Activated naive CD4-positive, alpha-beta T cell treated with anti-CD3 and anti-CD28 coated beads for 36 hours (primary cell): ENCODE measurements at regions of chr11 and their contacts with region 1.

Region 1: GRCh38 chr11:65117216-65118096 is at the start of gene ZNHIT2:
- DNase-seq: peak; percentile 100
- H3K4me3 Mint-ChIP-seq: peak within 1 kb of the TSS; percentile 87
- H3K27ac Mint-ChIP-seq: peak within 1 kb of the TSS; percentile 87
- H3K4me1 Mint-ChIP-seq: peaks cover 66% of the 10 kb centered on the region
- H3K27me3 Mint-ChIP-seq: no peaks in the 10 kb centered on the region
- total RNA-seq, gene ZNHIT2: 5.6 to 6.1 TPM

Region 2: GRCh38 chr11:64846998-64847666 is 270.3 kb before region 1 on chr11:
- CTCF ChIA-PET with region 1: interaction called, 14 read pairs
- intact Hi-C with region 1: loop called (anchors 1 kb)
- DNase-seq: peak; percentile 96
- H3K4me3 Mint-ChIP-seq: no peak overlapping the region
- H3K27ac Mint-ChIP-seq: no peak overlapping the region
- H3K4me1 Mint-ChIP-seq: peaks cover 57% of the 10 kb centered on the region
- H3K27me3 Mint-ChIP-seq: no peaks in the 10 kb centered on the region

Region 3: GRCh38 chr11:64971421-64972233 is 145.8 kb before region 1 on chr11 and contains the start of gene MAJIN:
- CTCF ChIA-PET with region 1: no interaction called
- intact Hi-C with region 1: loop called (anchors 5 kb)
- DNase-seq: peak; percentile 89
- H3K4me3 Mint-ChIP-seq: peak within 1 kb of the TSS; percentile 69
- H3K27ac Mint-ChIP-seq: peak within 1 kb of the TSS; percentile 81
- H3K4me1 Mint-ChIP-seq: peaks cover 41% of the 10 kb centered on the region
- H3K27me3 Mint-ChIP-seq: no peaks in the 10 kb centered on the region
- total RNA-seq, gene MAJIN: 0.29 to 0.37 TPM

Region 4: GRCh38 chr11:65083834-65084597 is 33.4 kb before region 1 on chr11 and contains the starts of genes CDCA5 and ZFPL1:
- CTCF ChIA-PET with region 1: interaction called, 4 read pairs
- intact Hi-C with region 1: loop called (anchors 1 kb)
- DNase-seq: peak; percentile 97
- H3K4me3 Mint-ChIP-seq: peak within 1 kb of the TSS; percentile 92
- H3K27ac Mint-ChIP-seq: peak within 1 kb of the TSS; percentile 97
- H3K4me1 Mint-ChIP-seq: peaks cover 39% of the 10 kb centered on the region
- H3K27me3 Mint-ChIP-seq: no peaks in the 10 kb centered on the region
- total RNA-seq, gene CDCA5: 169 to 174 TPM
- total RNA-seq, gene ZFPL1: 24.2 to 25.6 TPM

Region 5: GRCh38 chr11:65134386-65135253 is 17.2 kb after region 1 on chr11 and contains the start of gene SYVN1:
- CTCF ChIA-PET with region 1: interaction called, 4 read pairs
- intact Hi-C with region 1: loop called (anchors 1 kb)
- DNase-seq: peak; percentile 92
- H3K4me3 Mint-ChIP-seq: peak within 1 kb of the TSS; percentile 99
- H3K27ac Mint-ChIP-seq: peak within 1 kb of the TSS; percentile 100
- H3K4me1 Mint-ChIP-seq: peaks cover 29% of the 10 kb centered on the region
- H3K27me3 Mint-ChIP-seq: no peaks in the 10 kb centered on the region
- total RNA-seq, gene SYVN1: 19.0 to 19.2 TPM